ENCODE measurements at regions of chr10 and their contacts with region 1.

Region 1: DNA sequence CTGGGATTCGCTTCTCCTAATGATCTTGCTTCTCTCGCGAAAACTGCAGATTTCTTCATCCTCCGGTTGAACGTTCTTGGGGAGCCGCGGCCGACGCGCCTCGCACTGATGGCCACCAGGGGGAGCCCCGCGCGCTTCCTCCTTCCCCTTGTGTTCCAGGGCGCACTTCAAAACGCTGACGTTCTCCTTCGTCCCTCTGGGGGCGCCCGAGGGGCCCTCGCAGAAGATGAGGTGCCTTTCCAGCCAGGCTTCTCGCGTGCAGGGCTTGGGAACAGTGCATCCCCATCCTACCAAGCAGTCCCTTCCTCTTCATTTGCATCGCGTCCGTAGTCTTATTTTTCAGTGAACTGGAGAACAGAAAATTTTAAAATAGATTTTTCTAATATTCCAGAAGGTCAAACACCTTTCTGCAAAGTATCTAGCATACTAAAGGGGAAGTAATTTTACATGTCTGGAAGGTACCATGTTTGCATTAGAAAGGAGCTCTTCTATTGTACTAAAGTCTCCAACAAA is 22.5 kb downstream of the GSTO2 start:
- DNase-seq: peak; percentile 40
- ATAC-seq: peak; percentile 99
- H3K4me3 ChIP-seq: no peak overlapping the region
- H3K27ac ChIP-seq: no peak overlapping the region
- H3K4me1 ChIP-seq: no peaks in the 10 kb centered on the region
- H3K27me3 ChIP-seq: no peaks in the 10 kb centered on the region; a peak in 1 of 4 replicates
- CTCF ChIP-seq: peak; percentile 100; a peak in 5 of 6 replicates
- EP300 ChIP-seq: no peak
- POLR2A ChIP-seq: no peak
- RAD21 ChIP-seq: peak; percentile 81

Region 2: DNA sequence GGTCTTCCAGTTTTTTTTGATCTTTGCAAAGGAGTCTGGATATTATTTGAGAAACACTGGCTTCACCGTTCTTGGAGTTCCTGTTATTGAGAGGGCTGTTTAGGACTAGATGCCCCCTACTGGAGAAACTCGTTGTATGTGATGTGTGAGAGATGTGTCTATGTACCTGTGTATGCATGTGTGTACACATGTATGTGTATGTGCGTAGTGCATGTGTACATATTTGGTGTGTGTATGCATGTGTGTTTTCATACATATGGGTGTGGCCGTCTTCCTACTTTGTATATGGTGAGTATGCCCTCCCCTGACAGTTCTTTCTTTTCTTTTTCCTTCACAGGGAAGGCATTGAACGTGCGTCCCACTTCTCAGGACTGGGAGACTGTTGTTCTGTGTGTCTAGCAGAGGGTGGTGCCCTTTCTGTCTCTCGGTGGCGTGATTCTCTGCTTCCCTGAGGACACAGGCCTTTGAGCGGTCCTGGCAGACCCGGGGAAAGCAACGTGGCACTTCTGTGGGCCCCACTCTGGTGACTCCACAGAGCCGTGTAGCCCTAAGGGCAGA is 809.4 kb before region 1 on chr10:
- CTCF ChIA-PET with region 1: no interaction called
- POLR2A ChIA-PET with region 1: no interaction called
- RAD21 ChIA-PET with region 1: no interaction called
- SMC1A ChIA-PET with region 1: no interaction called
- in situ Hi-C with region 1: no loop called
- intact Hi-C with region 1: no loop called
- DNase-seq: no peak
- ATAC-seq: peak; percentile 93
- H3K4me3 ChIP-seq: no peak overlapping the region
- H3K27ac ChIP-seq: no peak overlapping the region
- H3K4me1 ChIP-seq: no peaks in the 10 kb centered on the region
- H3K27me3 ChIP-seq: no peaks in the 10 kb centered on the region
- CTCF ChIP-seq: peak; percentile 67 to 82 (median 76)
- EP300 ChIP-seq: no peak
- POLR2A ChIP-seq: no peak
- RAD21 ChIP-seq: peak; percentile 83

Region 3: GRCh38 chr10:104028146-104028545 is 263.3 kb before region 1 on chr10:
- CTCF ChIA-PET with region 1: no interaction called
- POLR2A ChIA-PET with region 1: interaction called, 10 read pairs
- RAD21 ChIA-PET with region 1: no interaction called
- SMC1A ChIA-PET with region 1: no interaction called
- in situ Hi-C with region 1: no loop called
- intact Hi-C with region 1: no loop called
- DNase-seq: no peak
- ATAC-seq: peak; percentile 66; the same call in 2 of the 3 replicates
- H3K4me3 ChIP-seq: no peak overlapping the region
- H3K27ac ChIP-seq: no peak overlapping the region
- H3K4me1 ChIP-seq: no peaks in the 10 kb centered on the region
- H3K27me3 ChIP-seq: no peaks in the 10 kb centered on the region
- CTCF ChIP-seq: peak in 2 of 3 experiments; percentile 9 to 29; a peak in 2 of 6 replicates
- EP300 ChIP-seq: no peak
- POLR2A ChIP-seq: no peak
- RAD21 ChIP-seq: peak; percentile 11; the same call in 1 of the 2 replicates

Region 4: DNA sequence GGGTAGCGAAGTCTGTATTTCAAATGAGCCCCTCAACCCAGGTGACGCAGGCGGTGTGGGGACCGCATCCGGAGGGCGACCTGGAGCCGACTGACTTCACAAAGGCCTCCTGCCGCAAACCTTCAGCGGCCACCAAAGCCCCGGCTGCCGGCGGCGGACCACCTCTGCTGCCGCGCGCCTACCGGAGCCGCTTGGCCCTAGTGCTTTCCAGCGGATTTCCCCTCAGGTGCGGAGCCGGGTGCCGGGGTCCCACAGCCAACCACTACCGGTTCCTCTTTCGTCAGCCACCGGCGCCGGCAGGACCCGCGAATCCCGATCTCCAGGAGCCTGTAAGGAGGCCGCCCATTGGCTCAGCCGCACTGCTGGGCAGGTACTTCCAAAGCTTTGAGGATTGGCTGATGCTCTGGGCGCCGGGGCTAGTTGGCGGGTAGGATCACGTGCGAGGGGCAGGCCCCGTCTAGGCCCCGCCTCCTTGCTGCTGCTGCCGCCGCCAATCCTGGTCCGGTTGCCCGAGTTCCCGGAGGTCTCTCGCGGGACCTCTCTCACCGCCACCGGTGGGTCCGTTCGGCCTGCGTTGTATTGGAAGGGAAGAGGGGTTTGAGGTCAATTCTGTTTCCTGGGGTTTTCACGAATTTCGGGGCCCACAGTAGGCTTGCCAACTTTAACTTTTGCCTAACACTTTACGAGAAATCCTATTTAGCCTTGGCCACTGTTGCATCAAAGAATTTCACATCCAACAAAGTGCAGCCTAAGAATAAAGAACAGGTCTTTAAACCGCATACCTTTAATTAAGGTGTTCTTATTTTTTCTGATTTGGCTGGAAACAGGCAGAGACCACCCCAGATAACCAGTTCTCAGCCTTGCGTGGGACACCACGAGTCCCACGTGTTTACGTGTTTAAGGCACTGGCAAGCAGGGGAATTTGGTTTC is 22.5 kb before region 1 on chr10 and contains the start of gene GSTO2:
- CTCF ChIA-PET with region 1: interaction called, 120 read pairs
- POLR2A ChIA-PET with region 1: interaction called, 3 read pairs
- RAD21 ChIA-PET with region 1: interaction called, 8 read pairs
- SMC1A ChIA-PET with region 1: interaction called, 12 read pairs
- in situ Hi-C with region 1: no loop called
- intact Hi-C with region 1: no loop called
- DNase-seq: peak; percentile 90
- ATAC-seq: peak; percentile 98
- H3K4me3 ChIP-seq: peak within 1 kb of the TSS; percentile 73
- H3K27ac ChIP-seq: peak within 1 kb of the TSS; percentile 80
- H3K4me1 ChIP-seq: 0 out of 2 replicates have a peak, but pooled peaks cover 3% of the 10 kb centered on the region
- H3K27me3 ChIP-seq: no peaks in the 10 kb centered on the region
- CTCF ChIP-seq: no peak
- EP300 ChIP-seq: no peak
- POLR2A ChIP-seq: peak; percentile 92
- RAD21 ChIP-seq: no peak
- polyA plus RNA-seq, gene GSTO2: 0.16 to 0.53 TPM

Region 5: GRCh38 chr10:104308439-104308903 is 17.0 kb after region 1 on chr10:
- CTCF ChIA-PET with region 1: interaction called, 163 read pairs
- POLR2A ChIA-PET with region 1: interaction called, 4 read pairs
- RAD21 ChIA-PET with region 1: interaction called, 14 read pairs
- SMC1A ChIA-PET with region 1: interaction called, 16 read pairs
- in situ Hi-C with region 1: no loop called
- intact Hi-C with region 1: no loop called
- DNase-seq: peak; percentile 56
- ATAC-seq: peak; percentile 83
- H3K4me3 ChIP-seq: peak overlapping the region; percentile 36; the same call in 1 of the 2 replicates
- H3K27ac ChIP-seq: peak overlapping the region; percentile 13; the same call in 1 of the 2 replicates
- H3K4me1 ChIP-seq: peaks cover 26% of the 10 kb centered on the region
- H3K27me3 ChIP-seq: no peaks in the 10 kb centered on the region
- CTCF ChIP-seq: no peak
- EP300 ChIP-seq: no peak
- POLR2A ChIP-seq: no peak
- RAD21 ChIP-seq: no peak

Region 6: GRCh38 chr10:104345941-104346340 is 54.4 kb after region 1 on chr10:
- CTCF ChIA-PET with region 1: interaction called, 333 read pairs
- POLR2A ChIA-PET with region 1: interaction called, 4 read pairs
- RAD21 ChIA-PET with region 1: interaction called, 55 read pairs
- SMC1A ChIA-PET with region 1: interaction called, 90 read pairs
- in situ Hi-C with region 1: loop called (anchors 10 kb)
- intact Hi-C with region 1: loop called (anchors 1 kb)
- DNase-seq: no peak
- ATAC-seq: no peak
- H3K4me3 ChIP-seq: no peak overlapping the region
- H3K27ac ChIP-seq: no peak overlapping the region
- H3K4me1 ChIP-seq: peaks cover 30% of the 10 kb centered on the region
- H3K27me3 ChIP-seq: no peaks in the 10 kb centered on the region
- CTCF ChIP-seq: no peak
- EP300 ChIP-seq: no peak
- POLR2A ChIP-seq: no peak
- RAD21 ChIP-seq: no peak